ENCODE measurements at regions of chr22 and their contacts with region 1.

Region 1: GRCh38 chr22:34414484-34415440 is 494.5 kb upstream of the LARGE1 start:
- ATAC-seq: peak; percentile 35 to 75 (median 55)
- H3K4me3 ChIP-seq: no peak overlapping the region
- H3K27ac ChIP-seq: no peak overlapping the region
- H3K4me1 ChIP-seq: peaks cover 0 to 2% of the 10 kb centered on the region in 2 donors

Region 2: DNA sequence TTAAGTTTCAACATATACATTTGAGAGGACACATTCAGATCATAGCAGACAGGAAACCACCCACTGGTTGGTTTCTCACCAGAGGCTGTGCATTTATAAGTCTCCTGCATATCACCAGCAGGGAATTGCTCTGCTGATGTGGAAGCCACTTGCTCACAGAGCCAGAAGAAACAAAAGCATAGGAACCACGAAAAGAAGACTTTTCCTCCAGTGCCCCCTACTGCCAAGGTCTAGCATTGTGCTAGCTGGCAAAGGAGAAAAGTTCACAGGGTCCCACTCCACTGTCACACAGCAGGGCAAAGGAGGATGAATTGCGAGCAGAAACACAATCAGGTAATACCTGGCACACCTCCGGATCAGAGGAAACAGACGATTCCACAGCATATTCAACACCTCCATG is 622.3 kb after region 1 on chr22:
- in situ Hi-C with region 1: loop called in 1 of 9 experiments (anchors 25 kb)
- ATAC-seq: no peak
- H3K4me3 ChIP-seq: no peak overlapping the region
- H3K27ac ChIP-seq: no peak overlapping the region
- H3K4me1 ChIP-seq: no peaks in the 10 kb centered on the region

Measured in motor neuron (in vitro differentiated cells).